Activated T-helper 1 cell treated with anti-CD3 and anti-CD28 coated beads, Interleukin-12 subunit alpha, Interleukin-12 subunit beta, Interleukin-2, Interleukin-4 antibody, amounts not matched to agents 30 ng/mL and 10 ng/mL and 1 ng/mL, durations not matched to agents 14 hours and 24 hours and 36 hours (primary cell): ENCODE measurements at regions of chr9 and their contacts with region 1.

Region 1: DNA sequence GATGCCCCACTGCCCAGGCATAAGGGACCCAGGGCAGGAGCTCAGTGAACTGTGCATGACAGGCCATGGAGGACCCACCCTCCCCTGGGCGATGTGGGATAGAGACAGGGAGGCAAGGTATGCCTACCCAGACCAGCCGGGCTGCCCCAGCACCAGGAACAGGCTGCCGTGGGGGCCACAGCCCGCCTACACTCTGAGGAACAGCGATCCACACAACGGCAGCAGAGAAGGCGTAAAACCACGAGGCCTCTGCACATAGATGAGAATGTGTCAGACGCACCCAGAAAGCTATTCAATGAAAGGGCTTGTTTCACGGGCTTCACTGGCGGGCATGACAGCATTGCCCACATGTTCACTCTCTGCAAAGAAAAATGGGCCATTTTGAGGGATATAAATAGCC is 49.5 kb downstream of the SEMA4D start:
- DNase-seq: no peak
- H3K4me3 Mint-ChIP-seq: peak overlapping the region; percentile 74
- H3K27ac Mint-ChIP-seq: peak overlapping the region; percentile 91
- H3K4me1 Mint-ChIP-seq: peaks cover 92% of the 10 kb centered on the region
- H3K27me3 Mint-ChIP-seq: no peaks in the 10 kb centered on the region

Region 2: GRCh38 chr9:89281106-89281505 is 167.3 kb before region 1 on chr9:
- intact Hi-C with region 1: no loop called
- DNase-seq: no peak
- H3K4me3 Mint-ChIP-seq: no peak overlapping the region
- H3K27ac Mint-ChIP-seq: no peak overlapping the region
- H3K4me1 Mint-ChIP-seq: peaks cover 20% of the 10 kb centered on the region
- H3K27me3 Mint-ChIP-seq: peaks cover 5% of the 10 kb centered on the region

Region 3: GRCh38 chr9:89334151-89334550 is 114.2 kb before region 1 on chr9:
- intact Hi-C with region 1: no loop called
- DNase-seq: no peak
- H3K4me3 Mint-ChIP-seq: no peak overlapping the region
- H3K27ac Mint-ChIP-seq: no peak overlapping the region
- H3K4me1 Mint-ChIP-seq: peaks cover 5% of the 10 kb centered on the region
- H3K27me3 Mint-ChIP-seq: no peaks in the 10 kb centered on the region

Region 4: DNA sequence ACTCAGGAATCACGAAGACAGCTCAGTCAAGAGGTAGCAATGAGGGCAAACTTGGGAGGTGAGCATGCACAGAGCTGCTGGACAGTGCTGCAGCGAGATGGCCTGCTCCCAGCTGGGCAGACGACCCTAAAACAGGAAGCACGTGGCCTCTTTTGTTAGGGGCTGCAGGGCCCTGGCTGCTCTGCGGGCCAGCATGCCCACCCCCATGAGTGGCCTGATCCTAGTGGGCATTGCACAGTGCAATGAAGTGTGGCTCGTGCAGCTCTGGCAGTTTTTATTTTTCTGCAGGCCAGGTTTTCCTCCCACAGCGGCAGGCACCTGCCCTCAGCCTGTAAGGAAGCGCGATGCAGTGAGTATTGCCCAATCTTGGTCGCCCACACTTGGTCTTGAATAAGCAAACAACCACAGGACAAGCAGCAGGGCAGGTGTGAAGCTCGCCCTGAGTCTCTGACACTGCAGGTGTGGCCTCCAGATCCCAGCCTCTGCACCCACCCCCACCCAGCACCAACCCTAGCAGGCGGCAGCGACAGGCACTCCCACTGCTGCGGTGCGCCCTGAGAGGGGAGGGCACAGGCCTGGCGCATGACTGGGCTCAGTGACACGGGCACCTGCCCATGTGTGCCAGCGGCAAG is 11.3 kb before region 1 on chr9:
- intact Hi-C with region 1: loop called (anchors 1 kb)
- DNase-seq: no peak
- H3K4me3 Mint-ChIP-seq: peak overlapping the region; percentile 15
- H3K27ac Mint-ChIP-seq: peak overlapping the region; percentile 80
- H3K4me1 Mint-ChIP-seq: peaks cover 78% of the 10 kb centered on the region
- H3K27me3 Mint-ChIP-seq: no peaks in the 10 kb centered on the region

Region 5: GRCh38 chr9:89461265-89461664 is 12.9 kb after region 1 on chr9:
- intact Hi-C with region 1: loop called (anchors 1 kb)
- DNase-seq: no peak
- H3K4me3 Mint-ChIP-seq: peak overlapping the region; percentile 40
- H3K27ac Mint-ChIP-seq: peak overlapping the region; percentile 79
- H3K4me1 Mint-ChIP-seq: peaks cover 92% of the 10 kb centered on the region
- H3K27me3 Mint-ChIP-seq: no peaks in the 10 kb centered on the region